GM10248 (cell line): ENCODE measurements at regions of chr1 and their contacts with region 1.

Region 1: DNA sequence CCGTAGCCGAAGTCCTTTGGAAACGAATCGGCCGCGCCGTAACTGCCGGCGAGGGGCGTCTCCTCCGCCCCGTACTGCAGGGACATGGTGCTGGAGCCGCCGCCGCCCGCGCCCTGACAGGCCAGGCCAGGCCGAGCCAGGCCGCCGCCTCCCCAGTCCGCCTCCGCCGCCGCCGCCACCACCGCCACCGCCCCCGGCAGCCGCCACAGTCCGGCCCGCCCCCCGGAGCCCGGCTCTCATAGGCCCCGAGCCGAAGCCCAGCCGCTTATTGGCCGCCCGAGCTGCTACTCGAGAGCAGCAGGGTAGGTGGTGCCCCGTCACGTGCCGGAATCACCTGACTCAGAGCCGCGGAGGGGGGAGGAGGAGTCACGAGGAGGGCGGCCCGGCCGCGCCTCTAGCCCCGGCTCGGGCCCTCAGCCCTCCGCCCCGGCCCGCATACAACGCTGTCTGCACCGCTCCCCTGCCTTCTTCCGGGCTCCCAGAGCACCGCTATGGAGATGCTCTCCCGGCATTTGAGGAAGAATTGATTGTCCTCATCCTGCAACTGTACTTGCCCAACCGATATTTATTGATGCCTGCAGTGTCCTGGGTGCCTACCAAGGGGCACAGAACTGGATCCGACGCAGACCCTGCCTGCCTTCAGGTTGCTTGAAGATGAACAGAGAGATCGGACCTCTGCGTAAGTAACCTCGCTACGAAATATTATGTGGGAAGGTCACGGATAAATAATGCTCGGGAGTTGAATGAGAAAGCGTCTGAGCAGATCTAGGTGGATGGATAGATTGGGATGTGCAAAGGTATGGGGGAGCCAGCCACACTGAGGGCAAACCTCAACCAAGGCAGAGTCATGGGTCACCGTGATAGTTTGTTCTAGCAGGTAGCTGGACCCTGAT is at the start of gene RRAGC:
- DNase-seq: peak; percentile 100
- CTCF ChIP-seq: no peak

Region 2: DNA sequence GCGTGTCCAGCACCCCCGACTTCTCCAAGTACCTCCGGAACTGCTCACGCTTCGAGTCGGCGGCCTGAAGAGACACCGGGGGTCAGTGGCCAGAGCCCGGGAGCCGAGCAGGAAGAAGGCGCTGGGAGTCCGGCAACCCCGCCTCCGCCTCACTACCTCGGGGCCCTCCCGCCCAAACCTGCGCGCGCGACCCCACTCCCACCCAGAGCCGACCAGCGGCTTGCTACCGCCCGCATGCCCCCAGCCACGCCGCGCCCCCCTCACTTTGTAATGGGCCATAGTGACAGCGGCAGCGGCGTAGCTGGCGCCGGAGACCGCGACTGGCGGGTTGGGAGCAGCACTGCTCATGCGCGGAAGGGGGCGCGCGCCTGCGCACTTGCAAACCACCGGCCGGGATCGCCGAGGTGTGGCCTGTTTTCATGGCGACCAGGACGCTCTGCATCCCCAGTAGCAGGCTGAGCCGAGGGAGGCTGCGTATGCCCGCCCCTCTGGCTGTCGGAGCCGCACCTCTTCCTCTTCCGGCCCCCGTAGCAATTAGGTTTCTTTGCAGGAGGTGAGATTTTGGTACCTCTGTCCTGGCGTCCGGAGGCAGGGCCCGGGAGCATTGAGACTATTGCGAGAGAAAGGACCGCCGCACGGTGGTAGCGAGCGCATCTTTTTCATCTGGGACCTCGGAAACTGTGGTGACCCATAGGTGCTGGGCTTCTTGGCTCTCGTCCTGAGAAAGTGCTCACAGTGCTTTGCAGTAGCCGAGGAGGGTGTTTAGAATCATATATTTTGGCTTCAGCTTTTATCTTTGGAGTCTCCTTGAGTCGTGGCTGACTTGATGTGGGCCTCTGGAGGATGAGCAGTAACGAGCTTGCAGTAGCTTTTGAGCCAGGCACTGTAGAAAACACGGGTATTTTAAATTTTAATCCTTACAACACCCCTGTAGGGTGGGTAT is 13.5 kb after region 1 on chr1 and contains the start of gene MYCBP:
- CTCF ChIA-PET with region 1: interaction called, 12 read pairs
- POLR2A ChIA-PET with region 1: no interaction called
- DNase-seq: peak; percentile 99
- CTCF ChIP-seq: no peak

Region 3: DNA sequence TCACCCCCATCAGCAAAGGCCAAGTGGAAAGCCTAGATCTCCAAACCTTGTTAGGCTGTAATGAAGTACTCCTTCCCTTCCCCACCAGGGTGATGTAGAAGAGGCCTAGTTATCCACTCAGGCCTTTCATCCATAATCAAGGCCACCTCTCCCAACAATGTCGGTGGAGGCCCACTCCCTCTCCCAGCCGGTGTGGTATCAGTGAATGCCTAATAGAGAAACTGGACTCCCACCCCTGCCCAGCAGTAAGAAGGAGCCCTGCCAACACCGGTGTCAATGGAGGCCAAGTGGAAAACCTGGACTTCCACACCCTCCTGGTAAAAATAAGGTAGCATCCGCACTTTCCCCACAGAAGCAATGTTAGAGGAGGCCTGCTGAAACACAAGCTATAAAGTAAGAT is 190.2 kb after region 1 on chr1:
- CTCF ChIA-PET with region 1: no interaction called
- POLR2A ChIA-PET with region 1: no interaction called
- DNase-seq: no peak
- CTCF ChIP-seq: no peak